HEK293 (cell line): ENCODE measurements at regions of chr1 and their contacts with region 1.

Region 1: GRCh38 chr1:161738627-161739287 is 10.8 kb upstream of the DUSP12 start:
- H3K4me3 ChIP-seq: no peak overlapping the region
- H3K27ac ChIP-seq: no peak overlapping the region
- H3K4me1 ChIP-seq: no peaks in the 10 kb centered on the region
- CTCF ChIP-seq: peak; percentile 70

Region 2: GRCh38 chr1:161486806-161487741 is 251.7 kb before region 1 on chr1:
- CTCF ChIA-PET with region 1: interaction called, 58 read pairs
- POLR2A ChIA-PET with region 1: no interaction called
- H3K4me3 ChIP-seq: no peak overlapping the region
- H3K27ac ChIP-seq: no peak overlapping the region
- H3K4me1 ChIP-seq: no peaks in the 10 kb centered on the region
- CTCF ChIP-seq: peak; percentile 60

Region 3: GRCh38 chr1:161726596-161727457 is 11.9 kb before region 1 on chr1:
- CTCF ChIA-PET with region 1: interaction called, 13 read pairs
- POLR2A ChIA-PET with region 1: interaction called, 6 read pairs
- H3K4me3 ChIP-seq: peak overlapping the region; percentile 62
- H3K27ac ChIP-seq: peak overlapping the region; percentile 70; the same call in 1 of the 2 replicates
- H3K4me1 ChIP-seq: no peaks in the 10 kb centered on the region; the same call in 1 of the 2 replicates
- CTCF ChIP-seq: peak; percentile 79

Region 4: GRCh38 chr1:161816201-161816600 is 77.4 kb after region 1 on chr1:
- CTCF ChIA-PET with region 1: no interaction called
- POLR2A ChIA-PET with region 1: no interaction called
- H3K4me3 ChIP-seq: no peak overlapping the region
- H3K27ac ChIP-seq: no peak overlapping the region
- H3K4me1 ChIP-seq: no peaks in the 10 kb centered on the region
- CTCF ChIP-seq: no peak